Activated CD4-positive, alpha-beta T cell treated with anti-CD3 and anti-CD28 coated beads, Interleukin-2, amount 10 ng/mL, durations not matched to agents 24 days and 14 days (primary cell): ENCODE measurements at regions of chr20 and their contacts with region 1.

Region 1: DNA sequence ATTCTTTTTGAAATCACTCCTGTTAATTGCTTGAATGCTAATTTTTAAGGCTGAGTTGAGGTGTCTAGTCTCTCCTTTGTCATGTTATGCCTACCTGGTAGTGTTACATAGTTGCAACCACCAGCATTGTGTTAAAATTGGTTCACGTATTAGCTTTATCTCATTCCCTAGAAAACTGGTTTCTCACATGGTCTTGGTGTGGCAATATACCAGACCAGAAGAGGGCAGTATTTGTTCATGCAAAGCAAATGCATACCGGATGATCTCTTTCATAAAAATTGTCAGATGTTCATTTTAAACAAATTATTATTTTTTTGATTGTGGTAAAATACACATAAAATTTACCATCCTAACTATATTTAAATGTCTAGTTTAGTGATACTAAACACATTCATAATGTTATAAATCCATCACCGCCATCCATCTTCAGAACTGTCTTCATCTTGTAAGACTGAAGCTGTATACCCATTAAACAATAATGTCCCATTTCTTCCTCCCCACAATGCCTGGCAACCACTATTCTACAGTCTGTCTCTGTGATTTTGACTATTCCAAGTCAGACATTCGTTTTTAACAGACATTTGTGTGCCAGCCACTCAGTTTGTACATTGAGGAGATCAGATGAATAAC is 92.8 kb downstream of the ATRN start:
- DNase-seq: peak; percentile 76
- H3K4me3 Mint-ChIP-seq: no peak overlapping the region
- H3K27ac Mint-ChIP-seq: no peak overlapping the region
- H3K4me1 Mint-ChIP-seq: no peaks in the 10 kb centered on the region
- H3K27me3 Mint-ChIP-seq: no peaks in the 10 kb centered on the region

Region 2: DNA sequence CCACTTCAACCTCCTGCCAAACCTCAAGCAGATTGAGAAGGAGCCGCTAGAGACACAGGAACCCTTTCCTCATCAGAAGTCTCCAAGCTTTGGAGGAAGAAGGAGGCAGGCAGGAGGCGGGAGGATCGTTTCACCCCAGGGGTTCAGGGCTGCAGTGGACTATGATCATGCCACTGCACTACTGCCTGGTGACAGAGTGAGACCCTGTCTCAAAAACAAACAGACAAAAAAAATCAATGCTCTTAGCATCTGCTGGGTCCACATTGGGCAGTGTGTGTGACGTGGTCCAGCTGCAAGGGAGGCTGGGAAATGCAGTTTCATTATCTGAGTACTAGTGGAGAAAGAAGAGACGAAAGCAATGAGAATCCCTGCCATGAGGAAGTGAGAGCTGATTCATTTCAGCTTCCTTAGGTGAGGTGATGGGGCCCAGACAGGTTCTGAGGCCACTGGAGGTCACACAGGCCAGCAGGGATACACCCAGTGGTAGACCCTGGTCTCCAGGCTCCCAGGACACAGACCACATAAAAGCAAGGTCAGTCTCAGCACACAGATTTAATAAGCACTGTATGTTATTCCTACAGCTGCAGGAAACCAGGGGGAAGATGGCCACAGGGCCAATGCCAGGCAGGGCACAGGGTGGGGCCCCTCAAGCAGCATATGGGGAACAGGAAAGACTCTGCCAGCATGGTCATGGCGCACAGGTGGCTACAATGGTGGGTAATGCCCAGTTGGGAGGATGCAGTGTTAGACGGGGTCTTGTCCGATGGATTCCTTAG is 95.2 kb after region 1 on chr20:
- intact Hi-C with region 1: loop called (anchors 10 kb)
- DNase-seq: peak; percentile 64
- H3K4me3 Mint-ChIP-seq: peak overlapping the region; percentile 40
- H3K27ac Mint-ChIP-seq: no peak overlapping the region
- H3K4me1 Mint-ChIP-seq: peaks cover 9% of the 10 kb centered on the region
- H3K27me3 Mint-ChIP-seq: peaks cover 45% of the 10 kb centered on the region

Region 3: DNA sequence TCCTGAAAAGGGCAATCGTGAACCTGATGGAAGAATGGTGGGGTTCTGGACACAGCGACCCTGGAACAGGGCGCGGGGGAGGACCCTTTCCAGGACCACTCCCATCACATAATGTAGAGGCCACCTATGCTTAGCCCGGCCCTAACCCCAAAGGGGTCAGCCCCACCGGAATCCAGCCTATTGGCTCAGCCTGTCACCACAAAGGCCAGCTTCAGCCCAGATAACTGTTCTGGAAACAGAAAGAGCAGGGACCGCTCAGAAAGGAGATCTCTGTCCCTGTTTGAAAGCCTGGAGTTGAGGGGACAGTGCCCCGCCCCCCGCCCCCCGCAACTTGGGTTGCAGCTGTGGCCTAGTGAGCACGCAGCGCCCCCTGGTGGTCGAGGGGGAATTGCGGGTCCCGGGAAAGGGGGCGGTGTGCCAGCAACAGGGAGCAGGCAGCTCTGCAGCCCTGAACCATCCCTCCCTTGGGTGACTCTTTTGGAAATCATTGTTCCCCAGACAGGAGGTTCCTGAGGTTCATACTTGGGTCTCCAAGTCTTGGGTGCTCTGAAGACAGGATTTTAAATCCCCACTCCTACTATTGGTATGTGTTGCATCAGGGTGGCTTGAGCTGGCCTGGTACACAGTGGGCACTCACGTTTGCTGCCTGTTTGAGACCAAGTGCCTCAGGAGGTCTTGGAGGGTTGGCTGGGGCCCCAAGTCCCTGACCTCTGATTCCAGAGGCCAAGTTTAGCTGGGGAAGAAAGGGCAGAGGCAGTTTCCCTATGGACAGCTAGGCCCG is 147.2 kb after region 1 on chr20:
- intact Hi-C with region 1: loop called (anchors 1 kb)
- DNase-seq: peak; percentile 93
- H3K4me3 Mint-ChIP-seq: no peak overlapping the region
- H3K27ac Mint-ChIP-seq: no peak overlapping the region
- H3K4me1 Mint-ChIP-seq: peaks cover 3% of the 10 kb centered on the region
- H3K27me3 Mint-ChIP-seq: peaks cover 7% of the 10 kb centered on the region